GM10248 (cell line): ENCODE measurements at regions of chr3 and their contacts with region 1.

Region 1: DNA sequence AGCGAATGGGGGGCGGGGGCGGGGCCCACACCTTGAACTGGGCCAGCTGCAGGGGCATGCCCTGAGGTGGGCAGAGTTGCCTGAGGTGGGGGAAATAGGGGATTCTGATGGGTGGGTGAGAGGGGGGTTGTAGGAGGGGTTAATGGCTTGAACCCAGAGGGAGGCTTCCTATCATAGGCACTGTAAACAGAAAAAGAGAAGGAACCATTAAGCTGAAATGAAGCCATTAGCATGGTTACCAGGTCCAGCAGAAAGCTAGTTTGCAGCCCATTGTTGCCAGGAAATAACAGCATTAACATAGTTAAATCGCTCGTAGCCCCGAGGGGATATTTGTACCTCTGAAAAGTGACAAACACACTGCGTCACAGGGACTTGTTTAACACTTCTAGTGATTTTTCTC is 29.0 kb downstream of the ETV5 start:
- DNase-seq: no peak
- CTCF ChIP-seq: no peak

Region 2: GRCh38 chr3:185613016-185613415 is 466.9 kb before region 1 on chr3:
- CTCF ChIA-PET with region 1: no interaction called
- POLR2A ChIA-PET with region 1: no interaction called
- DNase-seq: no peak
- CTCF ChIP-seq: no peak

Region 3: GRCh38 chr3:186097663-186098451 is 17.9 kb after region 1 on chr3:
- CTCF ChIA-PET with region 1: interaction called, 11 read pairs
- POLR2A ChIA-PET with region 1: no interaction called
- DNase-seq: no peak
- CTCF ChIP-seq: no peak